Left cardiac atrium (tissue), 4 donors: ENCODE measurements at regions of chr11 and their contacts with region 1.

Region 1: GRCh38 chr11:131694526-131695424 is 324.4 kb downstream of the NTM start:
- DNase-seq: peak; percentile 82
- ATAC-seq: peak; percentile 92

Region 2: DNA sequence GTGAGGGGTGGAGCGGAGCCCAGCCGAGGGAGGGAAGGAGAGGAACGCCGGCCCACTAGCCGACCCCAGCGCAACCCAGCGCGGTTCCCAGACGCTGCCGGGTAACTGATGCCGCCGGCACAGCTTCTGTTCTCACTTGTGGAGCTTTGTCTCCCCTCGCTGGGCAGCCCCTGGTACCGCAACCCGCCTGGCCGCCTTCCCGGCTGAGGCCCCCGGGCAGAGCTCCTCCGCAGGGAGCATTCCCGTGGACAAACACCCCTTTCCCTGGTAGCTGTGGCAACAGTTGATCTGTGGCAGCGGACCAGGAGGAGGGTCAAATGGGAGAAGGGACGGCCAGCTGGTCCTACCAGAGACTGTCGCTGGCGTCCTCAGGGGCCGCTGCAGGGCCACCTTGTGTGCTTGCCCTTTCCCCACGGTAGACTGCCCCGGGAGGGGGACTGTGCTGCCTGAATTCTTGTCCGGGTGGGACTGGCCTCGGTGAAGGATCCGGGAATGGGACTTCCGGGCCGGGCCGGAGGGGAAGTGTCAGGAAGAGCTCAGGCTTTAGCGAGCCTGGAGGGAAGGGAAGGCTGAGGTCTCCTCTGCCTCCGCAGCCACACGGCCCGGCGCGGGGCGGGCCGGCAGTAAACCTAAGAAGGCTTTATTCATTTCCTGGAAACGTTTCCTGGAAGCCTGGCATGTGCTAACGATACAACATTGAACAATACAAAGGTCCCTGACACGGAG is 1369.5 kb after region 1 on chr11:
- intact Hi-C with region 1: loop called in 1 of 2 experiments (anchors 10 kb)
- DNase-seq: peak; percentile 88
- ATAC-seq: peak; percentile 94 to 97